Adrenal gland (tissue), 19 donors: ENCODE measurements at regions of chr4 and their contacts with region 1.

Region 1: GRCh38 chr4:173257732-173258717 is 76.1 kb downstream of the HMGB2 start:
- DNase-seq: peak; percentile 62 to 86 (median 69)
- H3K4me3 ChIP-seq: no peak overlapping the region
- H3K27ac ChIP-seq: no peak overlapping the region
- H3K4me1 ChIP-seq: no peaks in the 10 kb centered on the region
- H3K27me3 ChIP-seq: no peaks in the 10 kb centered on the region
- CTCF ChIP-seq: peak; percentile 55 to 87 (median 74)
- POLR2A ChIP-seq: no peak

Region 2: GRCh38 chr4:173013232-173013930 is 244.6 kb before region 1 on chr4:
- intact Hi-C with region 1: loop called in 1 of 2 experiments (anchors 5 kb)
- DNase-seq: peak in 5 of 7 donors; percentile 22 to 73 (median 51)
- H3K4me3 ChIP-seq: no peak overlapping the region
- H3K27ac ChIP-seq: no peak overlapping the region
- H3K4me1 ChIP-seq: peaks cover 6 to 7% of the 10 kb centered on the region in 2 donors
- H3K27me3 ChIP-seq: no peaks in the 10 kb centered on the region
- CTCF ChIP-seq: peak; percentile 41 to 75 (median 64)
- POLR2A ChIP-seq: no peak

Region 3: DNA sequence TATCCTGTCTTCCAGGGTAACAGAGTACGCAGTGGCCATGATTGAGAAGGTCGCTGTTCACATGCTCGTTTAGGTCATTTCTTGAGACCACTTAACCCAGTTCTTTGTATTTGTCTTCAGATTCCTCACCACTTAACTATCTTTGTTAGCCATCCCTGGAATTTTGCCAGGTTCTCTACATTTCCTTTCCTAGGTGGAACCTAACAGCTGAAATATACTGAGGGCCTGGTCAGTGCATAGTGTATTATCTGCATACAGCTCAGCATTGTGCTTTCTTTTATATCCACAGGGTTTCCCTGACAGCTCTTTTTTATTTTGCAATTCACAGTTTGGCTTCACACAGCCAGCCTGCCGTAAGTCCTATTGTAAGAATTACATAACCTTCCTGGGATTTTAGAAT is 238.3 kb before region 1 on chr4:
- intact Hi-C with region 1: loop called (anchors 5 kb)
- DNase-seq: no peak
- H3K4me3 ChIP-seq: no peak overlapping the region
- H3K27ac ChIP-seq: no peak overlapping the region
- H3K4me1 ChIP-seq: no peaks in the 10 kb centered on the region
- H3K27me3 ChIP-seq: no peaks in the 10 kb centered on the region
- CTCF ChIP-seq: no peak
- POLR2A ChIP-seq: no peak